ENCODE measurements at regions of chr1 and their contacts with region 1.

Region 1: GRCh38 chr1:23809751-23810171 is 9.2 kb upstream of the GALE start:
- DNase-seq: peak; percentile 89
- H3K4me3 Mint-ChIP-seq: no peak overlapping the region
- H3K27ac Mint-ChIP-seq: no peak overlapping the region
- H3K4me1 Mint-ChIP-seq: peaks cover 12% of the 10 kb centered on the region
- H3K27me3 Mint-ChIP-seq: no peaks in the 10 kb centered on the region

Region 2: DNA sequence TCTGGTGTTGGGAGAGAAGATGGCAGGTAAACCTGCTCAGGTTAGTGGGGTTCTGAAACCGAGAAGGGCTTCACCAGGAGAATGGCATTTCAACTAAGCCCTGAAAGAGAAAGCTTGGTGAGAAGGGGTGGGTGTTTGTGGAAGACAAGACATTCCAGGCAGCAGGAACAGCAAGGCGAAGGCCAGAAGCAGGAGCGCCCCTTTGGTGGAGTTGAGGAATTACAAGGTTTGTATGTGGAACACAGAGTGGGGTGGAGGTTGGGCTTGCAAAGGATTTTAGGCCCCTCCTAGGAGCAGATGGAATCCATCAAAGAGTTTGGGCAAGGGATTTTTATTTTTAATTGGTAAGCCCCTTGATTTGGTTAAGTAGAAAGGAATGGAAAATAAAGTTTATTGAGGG is 91.3 kb before region 1 on chr1:
- CTCF ChIA-PET with region 1: no interaction called
- POLR2A ChIA-PET with region 1: no interaction called
- intact Hi-C with region 1: no loop called
- DNase-seq: no peak
- H3K4me3 Mint-ChIP-seq: no peak overlapping the region
- H3K27ac Mint-ChIP-seq: no peak overlapping the region
- H3K4me1 Mint-ChIP-seq: peaks cover 24% of the 10 kb centered on the region
- H3K27me3 Mint-ChIP-seq: no peaks in the 10 kb centered on the region

Region 3: DNA sequence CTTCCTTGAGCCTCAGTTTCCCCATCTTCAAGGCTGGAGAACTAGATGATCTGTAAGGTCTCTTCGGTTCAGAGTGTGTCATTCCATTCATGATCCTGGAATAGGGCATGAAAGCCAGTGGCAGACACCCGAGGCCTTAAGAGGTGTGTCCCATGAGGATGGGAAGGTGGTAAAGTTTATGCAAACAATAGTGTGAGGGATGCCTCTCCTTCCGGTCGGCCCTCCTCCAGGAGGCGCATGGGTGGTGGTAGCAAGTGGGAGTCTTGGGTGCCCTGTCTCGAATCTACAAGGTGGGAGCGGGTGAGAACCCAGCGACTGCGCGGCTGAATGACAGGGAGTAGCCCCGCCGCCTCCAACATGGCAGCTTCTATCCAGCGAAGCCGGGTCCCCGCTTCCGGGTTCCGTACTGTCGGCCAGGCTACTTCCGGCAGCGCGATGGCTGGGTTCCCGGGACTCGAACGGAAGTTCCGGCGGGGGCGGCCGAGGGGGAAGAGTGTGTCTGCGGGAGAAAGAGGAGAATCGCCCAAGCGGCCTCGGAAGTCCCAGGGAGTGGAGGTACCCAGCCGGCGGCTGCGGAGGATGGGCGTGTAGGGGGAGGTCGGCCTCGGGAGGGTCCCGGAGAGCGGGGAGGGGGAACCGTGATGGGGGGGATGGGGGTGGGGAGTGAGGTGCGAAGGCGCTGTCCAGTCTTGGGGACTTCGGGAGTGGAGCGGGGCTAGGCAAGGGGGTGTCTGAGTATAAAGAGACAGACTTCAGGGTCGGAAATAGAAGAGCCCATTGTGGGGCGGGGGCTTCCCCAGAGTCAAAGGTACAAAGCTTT is 18.9 kb before region 1 on chr1 and contains the start of gene LYPLA2:
- CTCF ChIA-PET with region 1: interaction called, 30 read pairs
- POLR2A ChIA-PET with region 1: interaction called, 3 read pairs
- intact Hi-C with region 1: no loop called
- DNase-seq: peak; percentile 93
- H3K4me3 Mint-ChIP-seq: peak within 1 kb of the TSS; percentile 98
- H3K27ac Mint-ChIP-seq: peak within 1 kb of the TSS; percentile 89
- H3K4me1 Mint-ChIP-seq: peaks cover 29% of the 10 kb centered on the region
- H3K27me3 Mint-ChIP-seq: no peaks in the 10 kb centered on the region
- total RNA-seq, gene LYPLA2: 70.5 to 71.1 TPM

Region 4: DNA sequence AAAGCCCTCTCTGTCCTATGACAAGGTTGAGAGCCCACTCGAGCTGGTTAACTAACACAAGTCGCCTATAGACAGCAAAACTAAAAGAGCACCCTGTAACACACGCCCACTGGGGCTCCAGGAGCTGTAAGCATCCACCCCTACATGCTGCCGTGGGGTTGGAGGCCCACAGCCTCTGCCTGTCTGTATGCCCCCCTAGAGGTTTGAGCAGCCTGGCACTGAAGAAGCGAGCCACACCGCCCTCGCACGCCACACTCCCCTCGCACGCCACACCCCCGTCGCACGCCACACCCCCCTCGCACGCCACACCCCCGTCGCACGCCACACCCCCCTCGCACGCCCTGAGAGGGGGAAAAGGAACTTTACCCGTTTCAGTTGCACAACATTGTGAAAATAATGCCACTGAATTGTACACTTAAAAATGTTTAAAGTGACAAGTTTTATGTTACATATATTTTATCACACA is 28.7 kb after region 1 on chr1:
- CTCF ChIA-PET with region 1: interaction called, 14 read pairs
- POLR2A ChIA-PET with region 1: no interaction called
- intact Hi-C with region 1: no loop called
- DNase-seq: peak; percentile 79
- H3K4me3 Mint-ChIP-seq: peak overlapping the region; percentile 60
- H3K27ac Mint-ChIP-seq: no peak overlapping the region
- H3K4me1 Mint-ChIP-seq: peaks cover 8% of the 10 kb centered on the region
- H3K27me3 Mint-ChIP-seq: peaks cover 6% of the 10 kb centered on the region

Region 5: GRCh38 chr1:23867953-23868556 is 58.3 kb after region 1 on chr1 and contains the start of gene FUCA1:
- CTCF ChIA-PET with region 1: interaction called, 54 read pairs
- POLR2A ChIA-PET with region 1: no interaction called
- intact Hi-C with region 1: loop called (anchors 1 kb)
- DNase-seq: peak; percentile 95
- H3K4me3 Mint-ChIP-seq: peak within 1 kb of the TSS; percentile 77
- H3K27ac Mint-ChIP-seq: no peak within 1 kb of the TSS
- H3K4me1 Mint-ChIP-seq: peaks cover 19% of the 10 kb centered on the region
- H3K27me3 Mint-ChIP-seq: peaks cover 1% of the 10 kb centered on the region
- total RNA-seq, gene FUCA1: 5.3 to 5.4 TPM

Region 6: DNA sequence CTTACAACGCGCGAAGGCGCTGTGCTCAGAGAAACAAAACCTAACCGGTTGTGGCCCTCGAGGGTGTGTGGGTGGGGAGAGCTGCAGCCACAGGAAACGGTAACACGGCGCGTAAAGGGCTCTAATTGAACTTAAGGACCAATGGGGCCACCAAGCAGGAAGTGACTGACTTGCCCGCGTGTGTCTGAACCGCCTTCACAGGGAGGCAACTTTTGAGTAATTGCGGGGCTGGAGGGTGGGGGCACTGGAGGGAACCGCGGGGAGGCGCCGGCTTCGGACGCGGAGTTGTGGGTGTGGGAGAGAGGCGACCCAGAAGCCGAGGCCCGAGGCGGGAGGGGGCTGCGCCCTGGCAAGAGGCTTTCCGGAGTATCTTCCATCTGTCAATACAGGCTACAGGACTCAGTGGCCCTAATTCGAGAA is 149.3 kb after region 1 on chr1:
- CTCF ChIA-PET with region 1: interaction called, 10 read pairs
- POLR2A ChIA-PET with region 1: no interaction called
- intact Hi-C with region 1: no loop called
- DNase-seq: peak; percentile 97
- H3K4me3 Mint-ChIP-seq: peak overlapping the region; percentile 100
- H3K27ac Mint-ChIP-seq: peak overlapping the region; percentile 100
- H3K4me1 Mint-ChIP-seq: peaks cover 53% of the 10 kb centered on the region
- H3K27me3 Mint-ChIP-seq: no peaks in the 10 kb centered on the region